ENCODE measurements at regions of chr22 and their contacts with region 1.

Region 1: GRCh38 chr22:20319745-20320658 is at the start of gene DGCR6L:
- DNase-seq: peak; percentile 93
- ATAC-seq: peak; percentile 74
- H3K4me3 ChIP-seq: peak within 1 kb of the TSS; percentile 98
- H3K27ac ChIP-seq: peak within 1 kb of the TSS; percentile 96
- H3K4me1 ChIP-seq: peaks cover 24% of the 10 kb centered on the region
- H3K27me3 ChIP-seq: no peaks in the 10 kb centered on the region
- CTCF ChIP-seq: no peak
- POLR2A ChIP-seq: peak; percentile 67
- RAD21 ChIP-seq: no peak
- total RNA-seq, gene DGCR6L: 65.4 and 68.6 TPM in 2 replicates

Region 2: DNA sequence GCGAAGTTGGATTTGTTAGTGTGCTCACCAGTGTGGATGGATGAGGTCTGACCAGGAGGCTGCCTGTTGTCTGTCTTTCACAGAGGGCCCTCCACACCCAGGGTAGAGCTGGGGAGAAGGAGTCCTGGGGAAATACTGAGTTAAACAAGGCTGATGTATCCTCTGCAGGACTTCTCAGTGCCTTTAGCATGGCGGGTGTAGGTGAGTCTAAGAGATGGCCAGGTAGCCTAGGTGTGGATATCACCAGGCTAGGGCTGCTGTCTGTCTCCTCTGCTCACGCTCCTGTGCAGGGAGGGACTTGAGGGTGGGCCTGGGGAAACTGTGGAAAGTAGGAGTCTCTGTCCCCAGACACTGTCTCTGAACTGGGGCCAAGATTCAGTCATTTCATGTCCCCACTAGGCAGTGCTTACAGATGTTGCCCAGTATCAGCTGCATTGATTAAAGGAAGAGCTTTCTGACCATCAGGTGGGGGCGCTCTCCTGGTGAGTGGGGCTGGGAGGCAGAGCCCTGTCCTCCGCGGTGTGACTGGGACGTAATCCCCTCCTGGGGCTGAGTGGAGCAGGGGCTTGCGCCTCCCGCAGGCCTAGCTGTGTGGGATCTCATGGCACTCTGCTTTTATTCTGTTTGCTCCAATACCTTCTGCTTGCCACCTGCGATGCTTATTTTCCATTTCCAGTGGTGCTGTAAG is 133.7 kb before region 1 on chr22:
- CTCF ChIA-PET with region 1: no interaction called
- POLR2A ChIA-PET with region 1: no interaction called
- dilution Hi-C with region 1: no loop called
- in situ Hi-C with region 1: no loop called
- intact Hi-C with region 1: no loop called
- DNase-seq: no peak
- ATAC-seq: no peak
- H3K4me3 ChIP-seq: no peak overlapping the region
- H3K27ac ChIP-seq: no peak overlapping the region
- H3K4me1 ChIP-seq: no peaks in the 10 kb centered on the region
- H3K27me3 ChIP-seq: peaks cover 36% of the 10 kb centered on the region
- CTCF ChIP-seq: 0 out of 2 replicates have a peak, but pooled peaks have one; percentile 15
- POLR2A ChIP-seq: no peak
- RAD21 ChIP-seq: no peak; the same call in 1 of the 2 replicates

Region 3: DNA sequence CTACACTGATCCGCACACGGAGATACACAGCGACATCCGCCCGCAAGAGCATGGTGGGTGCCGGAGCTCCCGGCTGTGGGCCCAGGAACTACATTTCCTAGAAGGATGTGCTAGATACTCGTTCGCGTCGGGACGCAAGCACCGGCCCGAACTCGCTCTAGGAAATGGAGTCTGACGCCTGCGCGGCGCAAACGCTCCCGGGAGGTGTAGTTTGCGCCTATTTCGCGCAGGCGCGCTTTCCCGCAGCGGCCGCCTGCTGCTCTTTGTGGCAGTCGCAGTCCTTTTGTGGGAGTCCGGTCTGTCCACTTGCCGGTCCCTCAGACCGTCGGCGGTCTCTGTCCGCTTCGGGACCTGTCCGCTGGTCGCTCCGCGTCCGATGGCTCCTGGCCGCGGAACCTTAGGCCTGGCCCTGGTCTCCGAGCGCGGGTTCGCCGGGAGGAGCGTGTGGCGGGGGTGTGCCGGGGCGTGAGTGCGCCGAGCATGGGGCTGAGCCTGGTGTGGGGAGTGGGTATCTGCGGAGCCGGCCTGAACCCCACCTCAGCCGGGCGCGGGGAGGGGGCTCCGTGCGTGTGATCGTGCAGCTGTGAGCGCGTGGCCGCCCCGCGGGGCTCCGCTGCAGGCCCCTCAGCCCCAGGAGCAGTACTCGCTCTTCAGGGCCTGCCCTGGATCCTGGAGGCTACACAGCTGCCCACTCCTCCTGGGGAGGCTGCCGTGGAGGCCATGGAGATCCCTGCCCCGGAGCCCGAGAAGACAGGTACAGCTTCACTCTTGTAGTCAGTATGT is 74.1 kb after region 1 on chr22 and contains the start of gene ZNF74:
- CTCF ChIA-PET with region 1: no interaction called
- POLR2A ChIA-PET with region 1: interaction called, 3 read pairs
- dilution Hi-C with region 1: no loop called
- in situ Hi-C with region 1: no loop called
- intact Hi-C with region 1: loop called (anchors 2 kb)
- DNase-seq: peak; percentile 88
- ATAC-seq: peak; percentile 97
- H3K4me3 ChIP-seq: peak within 1 kb of the TSS; percentile 75
- H3K27ac ChIP-seq: peak within 1 kb of the TSS; percentile 86
- H3K4me1 ChIP-seq: peaks cover 14% of the 10 kb centered on the region
- H3K27me3 ChIP-seq: no peaks in the 10 kb centered on the region
- CTCF ChIP-seq: no peak; the same call in 1 of the 2 replicates
- POLR2A ChIP-seq: peak; percentile 55
- RAD21 ChIP-seq: no peak; the same call in 1 of the 2 replicates
- total RNA-seq, gene ZNF74: 6.9 and 7.5 TPM in 2 replicates